ENCODE measurements at regions of chr2 and their contacts with region 1.

Region 1: DNA sequence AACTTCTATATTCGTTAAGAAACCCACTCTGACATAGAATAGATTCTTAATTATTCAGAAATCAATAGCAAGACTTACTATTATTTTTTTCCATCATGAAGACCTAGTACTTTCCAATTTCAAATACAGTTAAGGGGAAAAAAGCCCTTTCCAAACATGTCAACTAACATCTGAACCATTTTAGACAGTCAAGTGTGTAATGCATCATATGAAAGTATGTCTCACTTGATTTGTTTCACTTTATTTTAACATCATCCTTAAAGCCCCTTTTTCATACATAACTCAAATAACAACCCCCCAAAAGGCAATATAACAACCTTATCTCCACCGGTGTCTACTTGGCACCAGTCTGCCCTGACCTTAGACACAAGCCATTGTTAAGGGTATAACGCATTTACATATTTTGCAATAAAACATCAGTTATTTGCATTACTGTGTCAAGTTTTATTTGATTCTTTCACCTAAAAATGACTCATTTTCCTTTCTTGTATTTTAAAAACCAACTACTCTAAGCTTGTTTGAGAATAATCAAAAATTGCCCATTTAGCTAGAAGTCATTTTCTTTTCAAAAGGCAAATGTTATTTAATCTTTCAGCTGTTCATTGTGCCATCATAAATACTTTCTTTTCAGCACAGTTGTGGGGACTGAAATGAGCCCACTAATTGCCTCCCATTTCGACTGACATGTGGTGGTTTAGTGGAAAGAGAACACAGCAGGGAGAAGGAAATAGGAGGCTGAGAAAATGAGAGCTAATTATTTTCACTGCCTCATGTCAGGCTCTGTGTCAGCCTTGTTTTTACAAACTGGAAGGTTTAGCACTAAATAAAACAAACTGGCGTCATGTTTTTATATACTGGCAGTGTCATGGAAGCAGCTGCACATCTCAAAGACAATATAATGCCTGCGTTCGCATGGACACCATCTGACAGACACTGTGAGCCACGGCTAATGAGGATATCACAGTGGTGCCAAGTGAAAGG is 104.7 kb upstream of the CDCA7 start:
- DNase-seq: peak; percentile 59
- H3K4me3 ChIP-seq: no peak overlapping the region
- H3K27ac ChIP-seq: no peak overlapping the region
- H3K4me1 ChIP-seq: peaks cover 8% of the 10 kb centered on the region
- H3K27me3 ChIP-seq: no peaks in the 10 kb centered on the region
- CTCF ChIP-seq: no peak
- POLR2A ChIP-seq: no peak

Region 2: DNA sequence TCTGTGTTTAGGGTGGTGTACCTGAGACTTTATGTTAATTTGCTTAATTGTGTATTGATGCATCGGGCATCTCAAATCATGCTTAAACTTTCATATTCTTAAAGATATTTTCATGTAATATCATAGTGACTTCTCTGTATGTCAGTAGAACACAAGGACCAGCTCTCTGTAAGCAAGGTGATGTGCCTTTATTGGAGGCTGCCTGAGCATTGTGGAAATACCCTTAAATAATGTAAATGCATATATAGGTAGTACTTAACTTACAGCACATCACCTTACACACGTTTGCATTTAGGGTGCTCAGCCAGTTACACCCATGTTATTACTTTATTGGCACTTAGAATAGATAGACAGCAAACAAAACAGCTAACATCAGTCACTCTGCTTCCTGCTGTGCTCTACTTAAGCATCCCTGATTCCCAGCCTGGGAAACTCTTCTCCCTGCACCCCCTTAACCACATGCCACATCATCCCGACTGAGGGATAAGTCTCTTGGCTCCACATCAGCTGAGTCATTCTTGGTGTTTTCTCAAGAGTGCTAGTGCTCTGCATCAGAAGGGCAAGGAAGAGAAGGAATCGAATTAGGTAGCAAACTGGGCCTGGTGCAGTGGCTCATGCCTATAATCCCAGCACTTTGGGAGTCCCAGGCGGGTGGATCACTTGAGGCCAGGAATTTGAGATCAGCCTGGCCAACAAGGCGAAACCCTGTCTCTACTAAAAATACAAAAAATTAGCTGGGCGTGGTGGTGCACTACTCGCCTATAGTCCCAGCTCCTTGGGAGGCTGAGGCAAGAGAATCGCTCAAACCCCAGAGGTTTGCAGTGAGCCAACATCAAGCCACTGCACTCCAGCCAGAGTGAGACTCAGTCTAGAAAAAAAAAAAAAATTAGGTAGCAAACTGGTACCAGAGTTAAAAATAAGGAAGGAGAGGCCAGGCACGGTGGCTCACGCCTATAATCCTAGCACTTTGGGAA is 65.6 kb before region 1 on chr2:
- CTCF ChIA-PET with region 1: no interaction called
- POLR2A ChIA-PET with region 1: no interaction called
- dilution Hi-C with region 1: no loop called
- intact Hi-C with region 1: no loop called
- DNase-seq: peak; percentile 76
- H3K4me3 ChIP-seq: no peak overlapping the region
- H3K27ac ChIP-seq: no peak overlapping the region
- H3K4me1 ChIP-seq: peaks cover 3% of the 10 kb centered on the region
- H3K27me3 ChIP-seq: no peaks in the 10 kb centered on the region
- CTCF ChIP-seq: no peak
- POLR2A ChIP-seq: no peak

Region 3: DNA sequence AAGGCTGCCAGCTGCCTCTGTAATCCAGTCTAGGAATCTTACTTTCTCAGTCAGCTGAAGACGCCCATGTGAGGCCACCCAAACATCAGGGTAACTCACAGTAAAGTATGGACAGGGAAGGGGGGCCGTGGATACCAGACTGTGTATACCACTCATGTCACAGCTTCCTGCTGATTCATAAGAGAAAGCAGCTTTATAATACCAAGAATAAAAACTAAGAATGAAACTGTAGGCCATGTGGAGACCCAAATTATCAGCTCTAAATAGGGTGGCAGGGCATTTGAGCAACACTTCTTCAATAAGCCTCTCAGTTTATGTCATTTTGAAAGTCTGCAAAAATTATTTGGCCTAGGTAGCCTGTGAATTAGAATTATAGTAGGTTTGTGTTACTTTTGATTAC is 10.3 kb before region 1 on chr2:
- CTCF ChIA-PET with region 1: interaction called, 10 read pairs
- POLR2A ChIA-PET with region 1: no interaction called
- dilution Hi-C with region 1: no loop called
- intact Hi-C with region 1: no loop called
- DNase-seq: no peak
- H3K4me3 ChIP-seq: no peak overlapping the region
- H3K27ac ChIP-seq: no peak overlapping the region
- H3K4me1 ChIP-seq: no peaks in the 10 kb centered on the region
- H3K27me3 ChIP-seq: no peaks in the 10 kb centered on the region
- CTCF ChIP-seq: no peak
- POLR2A ChIP-seq: no peak

Region 4: DNA sequence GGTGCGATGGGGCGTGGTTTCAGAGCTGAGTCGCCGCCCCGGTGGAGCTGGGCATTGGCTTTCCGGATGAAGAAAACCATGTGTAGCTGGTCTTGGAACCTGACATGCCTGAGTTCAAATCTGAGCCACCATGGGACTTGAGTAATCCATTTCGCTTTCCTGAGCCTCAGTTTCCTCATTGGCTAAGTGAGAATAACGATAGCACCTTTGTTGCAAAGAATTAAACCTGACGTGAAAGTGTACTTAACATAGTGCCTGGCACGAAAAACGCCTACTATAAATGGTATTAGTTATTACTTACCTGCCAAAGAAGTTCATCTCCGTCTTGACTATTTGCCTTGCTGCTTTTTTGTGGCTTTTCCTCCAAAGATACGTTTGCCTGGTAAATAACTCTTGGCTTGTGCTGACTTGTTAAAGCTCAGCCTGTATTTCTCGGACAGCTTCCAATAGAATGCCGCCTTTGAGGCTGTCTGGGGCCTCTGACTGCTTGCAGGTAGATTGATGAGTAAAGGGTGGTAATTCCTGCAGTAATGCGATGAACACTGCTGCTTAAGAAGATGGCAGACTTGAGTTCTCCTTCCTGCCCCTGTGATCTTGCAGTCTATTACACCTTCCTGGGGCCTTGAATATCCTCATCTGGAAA is 106.0 kb after region 1 on chr2:
- CTCF ChIA-PET with region 1: no interaction called
- POLR2A ChIA-PET with region 1: no interaction called
- dilution Hi-C with region 1: no loop called
- intact Hi-C with region 1: no loop called
- DNase-seq: peak; percentile 36
- H3K4me3 ChIP-seq: peak overlapping the region; percentile 52 to 80 (median 55)
- H3K27ac ChIP-seq: peak overlapping the region; percentile 15
- H3K4me1 ChIP-seq: peaks cover 8% of the 10 kb centered on the region
- H3K27me3 ChIP-seq: peaks cover 0 to 3% of the 10 kb centered on the region in 2 experiments
- CTCF ChIP-seq: no peak
- POLR2A ChIP-seq: no peak